Natural killer cell (primary cell): ENCODE measurements at regions of chr6 and their contacts with region 1.

Region 1: DNA sequence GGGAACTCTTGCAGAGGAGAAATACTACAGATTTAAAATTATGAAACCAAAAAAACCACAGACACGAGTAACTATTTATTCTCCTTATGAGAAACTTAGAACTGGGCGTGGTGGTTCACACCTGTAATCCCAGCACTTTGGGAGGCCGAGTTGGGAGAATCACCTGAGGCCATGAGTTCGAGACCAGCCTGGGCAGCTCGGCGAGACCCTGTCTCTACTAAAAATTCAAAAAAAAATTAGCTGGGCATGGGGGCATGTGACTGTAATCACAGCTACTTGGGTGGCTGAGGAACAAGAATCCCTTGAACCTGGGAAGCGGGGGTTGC is 36.8 kb downstream of the SSR1 start:
- DNase-seq: no peak
- ATAC-seq: no peak
- H3K4me3 ChIP-seq: no peak overlapping the region
- H3K4me3 Mint-ChIP-seq: no peak overlapping the region
- H3K27ac ChIP-seq: no peak overlapping the region
- H3K27ac Mint-ChIP-seq: no peak overlapping the region
- H3K4me1 ChIP-seq: peaks cover 9% of the 10 kb centered on the region
- H3K4me1 Mint-ChIP-seq: peaks cover 7 to 11% of the 10 kb centered on the region in 2 donors
- H3K27me3 ChIP-seq: no peaks in the 10 kb centered on the region
- H3K27me3 Mint-ChIP-seq: no peaks in the 10 kb centered on the region
- CTCF ChIP-seq: no peak

Region 2: DNA sequence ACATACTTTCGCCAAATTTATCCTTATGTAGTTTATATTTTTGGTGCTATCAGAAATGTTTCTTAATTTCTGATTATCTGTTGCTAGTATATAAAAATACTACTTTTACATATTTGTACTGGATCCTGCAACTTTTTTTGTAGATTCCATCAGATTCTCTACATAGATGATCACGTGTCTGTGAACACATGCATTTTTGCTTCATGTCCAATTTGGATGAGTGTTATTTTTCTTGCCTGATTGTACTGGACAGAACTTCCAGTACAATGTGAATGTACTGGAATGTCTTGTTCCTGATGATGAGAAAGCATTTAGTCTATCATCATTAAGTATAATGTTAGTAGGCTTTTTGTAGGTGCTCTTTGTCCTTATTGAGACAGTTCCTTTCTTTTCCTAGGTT is 61.9 kb after region 1 on chr6:
- intact Hi-C with region 1: loop called (anchors 2 kb)
- DNase-seq: no peak
- ATAC-seq: no peak
- H3K4me3 ChIP-seq: no peak overlapping the region
- H3K4me3 Mint-ChIP-seq: no peak overlapping the region
- H3K27ac ChIP-seq: no peak overlapping the region
- H3K27ac Mint-ChIP-seq: no peak overlapping the region
- H3K4me1 ChIP-seq: no peaks in the 10 kb centered on the region
- H3K4me1 Mint-ChIP-seq: peaks cover 0 to 6% of the 10 kb centered on the region in 2 donors
- H3K27me3 ChIP-seq: no peaks in the 10 kb centered on the region
- H3K27me3 Mint-ChIP-seq: peaks cover 13 to 20% of the 10 kb centered on the region in 2 donors
- CTCF ChIP-seq: no peak